CD4-positive, alpha-beta memory T cell (primary cell): ENCODE measurements at regions of chr3 and their contacts with region 1.

Region 1: GRCh38 chr3:108552267-108553159 is 36.7 kb downstream of the CIP2A start:
- DNase-seq: peak in 4 of 5 donors; percentile 38 to 50 (median 39)
- H3K4me3 ChIP-seq: no peak overlapping the region
- H3K4me3 Mint-ChIP-seq: peak overlapping the region in 1 of 8 donors; percentile 14
- H3K27ac ChIP-seq: no peak overlapping the region
- H3K27ac Mint-ChIP-seq: peak overlapping the region in 2 of 7 donors; percentile 6 to 38
- H3K4me1 ChIP-seq: no peaks in the 10 kb centered on the region
- H3K4me1 Mint-ChIP-seq: peaks cover 4 to 7% (median 7%) of the 10 kb centered on the region in 4 donors
- H3K27me3 ChIP-seq: no peaks in the 10 kb centered on the region
- H3K27me3 Mint-ChIP-seq: no peaks in the 10 kb centered on the region

Region 2: DNA sequence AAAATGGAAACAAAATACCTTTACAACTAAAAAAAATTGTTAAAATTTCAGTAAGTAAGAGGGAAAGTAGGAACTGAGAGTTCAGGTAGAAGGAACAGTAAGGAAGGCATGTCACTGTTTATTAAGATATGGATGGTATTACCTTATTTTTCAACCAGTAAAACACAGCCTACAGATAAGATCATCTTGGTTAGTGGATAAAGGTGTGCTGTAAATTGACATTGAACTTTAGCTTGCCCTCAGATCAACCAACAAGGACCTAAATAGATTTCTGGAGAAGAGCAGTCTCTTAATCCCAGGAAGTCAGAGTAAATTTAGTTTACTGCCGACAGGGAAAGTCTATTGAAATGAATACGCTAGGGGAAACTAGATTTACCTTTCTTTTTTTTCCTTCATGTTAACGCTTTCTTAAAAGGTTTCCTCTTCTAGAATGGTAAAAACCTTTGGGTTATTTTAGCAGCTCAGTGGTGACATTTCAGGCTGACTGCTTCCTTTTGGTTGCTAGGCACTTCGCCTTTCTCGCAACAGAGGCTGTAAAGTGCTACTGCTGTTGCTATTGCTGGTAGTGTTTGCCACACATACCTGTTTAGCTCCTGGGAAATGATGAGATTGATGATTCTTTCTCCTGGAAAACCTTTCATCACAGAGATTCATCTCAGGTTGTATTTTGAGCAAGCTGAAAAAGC is 49.9 kb after region 1 on chr3:
- CTCF ChIA-PET with region 1: interaction called, 11 read pairs
- POLR2A ChIA-PET with region 1: interaction called, 4 read pairs
- intact Hi-C with region 1: no loop called
- DNase-seq: peak; percentile 38 to 63 (median 50)
- H3K4me3 ChIP-seq: peak overlapping the region in 1 of 2 donors; percentile 27
- H3K4me3 Mint-ChIP-seq: peak overlapping the region; percentile 54 to 86 (median 82)
- H3K27ac ChIP-seq: peak overlapping the region; percentile 56
- H3K27ac Mint-ChIP-seq: peak overlapping the region; percentile 63 to 99 (median 91)
- H3K4me1 ChIP-seq: peaks cover 59% of the 10 kb centered on the region
- H3K4me1 Mint-ChIP-seq: peaks cover 37 to 68% (median 43%) of the 10 kb centered on the region in 4 donors
- H3K27me3 ChIP-seq: no peaks in the 10 kb centered on the region
- H3K27me3 Mint-ChIP-seq: no peaks in the 10 kb centered on the region

Region 3: GRCh38 chr3:109081746-109082510 is 529.4 kb after region 1 on chr3:
- CTCF ChIA-PET with region 1: no interaction called
- POLR2A ChIA-PET with region 1: no interaction called
- intact Hi-C with region 1: loop called (anchors 10 kb)
- DNase-seq: peak in 4 of 5 donors; percentile 2 to 30 (median 17)
- H3K4me3 ChIP-seq: no peak overlapping the region
- H3K4me3 Mint-ChIP-seq: peak overlapping the region in 1 of 8 donors; percentile 23
- H3K27ac ChIP-seq: no peak overlapping the region
- H3K27ac Mint-ChIP-seq: no peak overlapping the region
- H3K4me1 ChIP-seq: no peaks in the 10 kb centered on the region
- H3K4me1 Mint-ChIP-seq: no peaks in the 10 kb centered on the region
- H3K27me3 ChIP-seq: peaks cover 5% of the 10 kb centered on the region
- H3K27me3 Mint-ChIP-seq: peaks cover 10 to 17% of the 10 kb centered on the region in 2 donors